ENCODE measurements at regions of chr12 and their contacts with region 1.

Region 1: GRCh38 chr12:21940549-21941505 is at the start of gene ABCC9:
- DNase-seq: peak; percentile 73 to 85
- ATAC-seq: peak; percentile 87 to 91
- H3K4me3 ChIP-seq: peak within 1 kb of the TSS; percentile 61 to 78 (median 70)
- H3K27ac ChIP-seq: peak within 1 kb of the TSS; percentile 91 to 97 (median 93)
- H3K4me1 ChIP-seq: peaks cover 25 to 34% of the 10 kb centered on the region in 2 donors
- H3K27me3 ChIP-seq: no peaks in the 10 kb centered on the region
- CTCF ChIP-seq: peak in 1 of 5 experiments; percentile 7
- POLR2A ChIP-seq: peak; percentile 90 to 94
- total RNA-seq, gene ABCC9: 76.1 to 140 (median 118) TPM

Region 2: GRCh38 chr12:21551841-21552465 is 388.9 kb before region 1 on chr12:
- in situ Hi-C with region 1: no loop called
- intact Hi-C with region 1: no loop called
- DNase-seq: peak; percentile 6 to 52
- ATAC-seq: peak; percentile 90 to 96
- H3K4me3 ChIP-seq: peak overlapping the region in 1 of 4 donors; percentile 11
- H3K27ac ChIP-seq: peak overlapping the region; percentile 64 to 82 (median 76)
- H3K4me1 ChIP-seq: peaks cover 16 to 26% of the 10 kb centered on the region in 2 donors
- H3K27me3 ChIP-seq: no peaks in the 10 kb centered on the region
- CTCF ChIP-seq: no peak
- POLR2A ChIP-seq: no peak

Region 3: GRCh38 chr12:21773263-21773741 is 167.5 kb before region 1 on chr12:
- in situ Hi-C with region 1: no loop called
- intact Hi-C with region 1: loop called (anchors 2 kb)
- DNase-seq: peak; percentile 26 to 59
- ATAC-seq: peak; percentile 67 to 77
- H3K4me3 ChIP-seq: peak overlapping the region; percentile 59 to 66 (median 62)
- H3K27ac ChIP-seq: peak overlapping the region; percentile 57 to 73 (median 71)
- H3K4me1 ChIP-seq: no peaks in the 10 kb centered on the region
- H3K27me3 ChIP-seq: peaks cover 0 to 5% (median 5%) of the 10 kb centered on the region in 3 donors
- CTCF ChIP-seq: peak in 2 of 5 experiments; percentile 22 to 36
- POLR2A ChIP-seq: no peak

Region 4: GRCh38 chr12:21828779-21829178 is 112.0 kb before region 1 on chr12:
- in situ Hi-C with region 1: no loop called
- intact Hi-C with region 1: loop called (anchors 5 kb)
- DNase-seq: peak; percentile 62 to 65
- ATAC-seq: peak; percentile 84 to 89
- H3K4me3 ChIP-seq: peak overlapping the region in 1 of 4 donors; percentile 11
- H3K27ac ChIP-seq: peak overlapping the region; percentile 61 to 87 (median 74)
- H3K4me1 ChIP-seq: peaks cover 12 to 57% of the 10 kb centered on the region in 2 donors
- H3K27me3 ChIP-seq: no peaks in the 10 kb centered on the region
- CTCF ChIP-seq: no peak
- POLR2A ChIP-seq: no peak

Region 5: GRCh38 chr12:21881965-21882364 is 58.9 kb before region 1 on chr12:
- in situ Hi-C with region 1: no loop called
- intact Hi-C with region 1: loop called (anchors 5 kb)
- DNase-seq: peak; percentile 59 to 68
- ATAC-seq: peak; percentile 88 to 95
- H3K4me3 ChIP-seq: no peak overlapping the region
- H3K27ac ChIP-seq: peak overlapping the region; percentile 79 to 82 (median 81)
- H3K4me1 ChIP-seq: peaks cover 46% of the 10 kb centered on the region in 2 donors
- H3K27me3 ChIP-seq: no peaks in the 10 kb centered on the region
- CTCF ChIP-seq: no peak
- POLR2A ChIP-seq: no peak

Region 6: DNA sequence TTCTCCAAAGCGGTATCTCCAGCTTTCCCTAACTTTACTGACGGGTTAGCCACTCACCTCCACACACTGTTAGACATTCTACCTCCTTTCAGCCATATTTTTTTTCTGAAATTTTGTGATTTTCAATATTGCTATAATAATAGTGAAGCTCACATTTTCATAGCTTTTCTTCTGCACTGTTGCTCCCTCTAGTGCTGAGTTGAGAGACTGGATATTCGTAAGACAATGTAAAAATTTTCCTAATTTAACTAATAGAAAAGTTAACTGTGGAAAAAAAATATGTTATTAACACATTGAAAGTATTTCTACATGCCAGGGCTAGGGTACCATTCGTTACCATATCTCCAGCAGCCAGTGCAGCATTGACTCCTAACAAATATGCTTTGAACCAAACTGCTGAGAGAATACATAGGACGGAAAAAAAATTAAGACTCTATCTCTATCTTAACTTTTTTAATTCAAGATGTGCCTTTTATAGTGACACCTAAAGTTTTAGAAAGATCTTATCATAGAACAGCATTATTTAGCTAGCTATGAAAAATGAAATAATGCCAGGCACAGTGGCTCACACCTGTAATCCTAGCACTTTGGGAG is 49.1 kb after region 1 on chr12:
- in situ Hi-C with region 1: no loop called
- intact Hi-C with region 1: loop called (anchors 5 kb)
- DNase-seq: no peak
- ATAC-seq: no peak
- H3K4me3 ChIP-seq: no peak overlapping the region
- H3K27ac ChIP-seq: no peak overlapping the region
- H3K4me1 ChIP-seq: no peaks in the 10 kb centered on the region
- H3K27me3 ChIP-seq: no peaks in the 10 kb centered on the region
- CTCF ChIP-seq: peak; percentile 19 to 57 (median 52)
- POLR2A ChIP-seq: no peak

Measured in gastrocnemius medialis (tissue), 4 donors.